Transverse colon (tissue), 4 donors: ENCODE measurements at regions of chr13 and their contacts with region 1.

Region 1: GRCh38 chr13:48595431-48596429 is 58.0 kb upstream of the CYSLTR2 start:
- DNase-seq: peak; percentile 64
- H3K4me3 ChIP-seq: no peak overlapping the region
- H3K27ac ChIP-seq: no peak overlapping the region
- H3K4me1 ChIP-seq: peaks cover 0 to 21% (median 9%) of the 10 kb centered on the region in 4 donors
- H3K27me3 ChIP-seq: no peaks in the 10 kb centered on the region
- CTCF ChIP-seq: peak; percentile 45 to 92 (median 63)
- EP300 ChIP-seq: no peak
- POLR2A ChIP-seq: no peak

Region 2: GRCh38 chr13:48303359-48304142 is 292.2 kb before region 1 on chr13 and contains the start of gene RB1:
- in situ Hi-C with region 1: loop called in 1 of 4 experiments (anchors 25 kb)
- intact Hi-C with region 1: no loop called
- DNase-seq: peak; percentile 94
- H3K4me3 ChIP-seq: peak within 1 kb of the TSS; percentile 85 to 98 (median 90)
- H3K27ac ChIP-seq: peak within 1 kb of the TSS; percentile 98 to 100 (median 99)
- H3K4me1 ChIP-seq: peaks cover 6 to 28% (median 16%) of the 10 kb centered on the region in 4 donors
- H3K27me3 ChIP-seq: no peaks in the 10 kb centered on the region
- CTCF ChIP-seq: peak in 1 of 5 experiments; percentile 31
- EP300 ChIP-seq: peak; percentile 25
- POLR2A ChIP-seq: peak; percentile 96
- total RNA-seq, gene RB1: 14.6 to 31.0 (median 23.2) TPM

Region 3: DNA sequence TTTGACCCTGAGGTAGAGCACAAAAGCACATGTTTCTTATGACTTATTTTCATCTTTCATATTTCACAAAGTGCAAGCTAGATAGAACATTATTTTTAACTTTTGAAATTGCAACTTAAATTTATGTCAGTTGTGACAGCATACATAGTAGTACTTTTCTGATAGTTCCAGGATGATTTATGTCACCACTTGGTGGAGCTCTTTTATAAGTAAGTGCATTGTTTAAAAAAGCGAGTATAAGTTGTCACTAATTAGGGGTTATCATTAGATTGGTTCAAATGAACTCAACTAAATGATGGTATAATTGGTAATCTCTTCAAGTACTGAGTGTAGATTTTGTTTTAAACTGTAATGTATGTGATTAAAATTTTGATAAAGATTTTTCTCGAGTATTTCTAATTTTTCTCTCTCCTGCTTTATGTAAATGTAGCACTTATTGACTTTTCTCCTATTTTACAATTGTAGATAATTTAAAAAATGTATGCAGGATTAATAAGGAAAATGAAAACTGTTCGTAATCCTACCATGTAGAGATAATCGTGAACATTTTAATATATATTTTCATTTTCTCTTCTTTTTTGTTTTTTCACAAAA is 261.1 kb before region 1 on chr13:
- in situ Hi-C with region 1: loop called in 2 of 4 experiments (anchors 25 kb)
- intact Hi-C with region 1: no loop called
- DNase-seq: no peak
- H3K4me3 ChIP-seq: no peak overlapping the region
- H3K27ac ChIP-seq: no peak overlapping the region
- H3K4me1 ChIP-seq: no peaks in the 10 kb centered on the region
- H3K27me3 ChIP-seq: no peaks in the 10 kb centered on the region
- CTCF ChIP-seq: peak; percentile 44 to 56 (median 53)
- EP300 ChIP-seq: no peak
- POLR2A ChIP-seq: no peak

Region 4: DNA sequence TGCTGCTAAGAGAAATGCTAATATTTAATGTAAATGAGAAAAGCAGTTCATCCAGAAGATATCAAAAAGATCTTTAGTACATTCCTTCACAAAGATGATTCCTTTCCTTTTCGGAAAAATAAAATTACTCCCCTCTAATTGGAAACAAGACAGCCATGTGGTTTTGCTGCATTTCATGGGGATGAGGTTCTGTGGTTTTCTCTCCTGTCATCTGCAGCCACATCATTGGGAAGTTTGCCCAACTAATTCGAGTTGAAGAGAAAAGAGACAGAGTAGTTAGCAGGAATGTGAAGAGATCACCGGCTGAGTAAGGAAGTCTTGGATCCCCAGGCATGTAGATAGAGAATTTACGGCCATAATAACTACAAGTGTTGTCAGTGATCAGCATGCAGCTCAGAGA is 180.1 kb after region 1 on chr13:
- in situ Hi-C with region 1: loop called in 2 of 4 experiments (anchors 10 to 25 kb)
- intact Hi-C with region 1: loop called (anchors 10 kb)
- DNase-seq: no peak
- H3K4me3 ChIP-seq: no peak overlapping the region
- H3K27ac ChIP-seq: no peak overlapping the region
- H3K4me1 ChIP-seq: no peaks in the 10 kb centered on the region
- H3K27me3 ChIP-seq: no peaks in the 10 kb centered on the region
- CTCF ChIP-seq: no peak
- EP300 ChIP-seq: no peak
- POLR2A ChIP-seq: no peak